Common myeloid progenitor, CD34-positive (primary cell): ENCODE measurements at regions of chr6 and their contacts with region 1.

Region 1: GRCh38 chr6:117555882-117556498 is 46.3 kb downstream of the GOPC start:
- DNase-seq: peak; percentile 30 to 66 (median 50)
- H3K4me3 ChIP-seq: no peak overlapping the region
- H3K27ac ChIP-seq: no peak overlapping the region
- H3K4me1 ChIP-seq: peaks cover 0 to 8% (median 2%) of the 10 kb centered on the region in 4 experiments
- H3K27me3 ChIP-seq: peaks cover 0 to 2% (median 0%) of the 10 kb centered on the region in 5 experiments

Region 2: DNA sequence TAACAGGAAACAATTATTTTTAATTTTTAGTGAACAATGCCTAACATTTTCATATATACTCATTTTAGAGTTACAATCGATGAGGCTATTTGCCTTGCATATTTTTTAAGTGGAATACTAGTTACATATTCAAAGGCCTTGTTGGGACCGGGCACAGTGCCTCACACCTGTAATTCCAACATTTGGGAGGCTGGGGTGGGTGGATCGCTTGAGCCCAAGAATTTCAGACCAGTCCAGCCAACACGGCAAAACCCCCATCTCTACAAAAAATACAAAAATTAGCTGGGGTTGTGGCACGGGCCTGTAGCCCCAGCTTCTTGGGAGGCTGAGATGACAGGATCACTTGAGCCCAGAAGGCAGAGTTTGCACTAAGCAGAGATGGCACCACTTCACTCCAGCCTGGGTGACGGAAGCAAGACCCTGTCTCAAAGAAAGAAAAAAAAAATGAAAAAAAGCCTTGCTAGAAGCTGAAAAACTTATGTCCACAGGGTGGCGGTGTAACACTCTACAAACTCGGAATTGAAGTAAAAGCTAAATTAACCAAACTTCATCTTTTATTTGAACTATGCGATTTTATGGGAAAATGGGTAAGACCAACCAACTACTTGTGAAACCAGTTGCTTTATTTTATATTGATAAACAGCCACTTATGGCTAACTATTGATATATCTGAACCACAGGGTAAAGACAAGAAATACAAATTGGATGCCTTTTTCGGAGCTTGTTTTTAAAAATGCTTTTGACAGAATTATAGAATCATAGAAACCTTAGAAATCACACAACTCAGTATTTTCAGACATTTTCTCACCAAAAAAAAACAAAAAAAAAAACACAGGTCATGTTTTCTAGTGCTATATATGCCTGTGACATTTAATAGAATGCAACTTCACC is 106.2 kb before region 1 on chr6:
- CTCF ChIA-PET with region 1: interaction called, 45 read pairs
- POLR2A ChIA-PET with region 1: no interaction called
- DNase-seq: peak; percentile 83 to 91 (median 84)
- H3K4me3 ChIP-seq: no peak overlapping the region
- H3K27ac ChIP-seq: no peak overlapping the region
- H3K4me1 ChIP-seq: no peaks in the 10 kb centered on the region
- H3K27me3 ChIP-seq: peaks cover 4 to 32% (median 15%) of the 10 kb centered on the region in 5 experiments

Region 3: GRCh38 chr6:117506180-117506835 is 49.7 kb before region 1 on chr6:
- CTCF ChIA-PET with region 1: no interaction called
- POLR2A ChIA-PET with region 1: no interaction called
- DNase-seq: no peak
- H3K4me3 ChIP-seq: no peak overlapping the region
- H3K27ac ChIP-seq: no peak overlapping the region
- H3K4me1 ChIP-seq: no peaks in the 10 kb centered on the region
- H3K27me3 ChIP-seq: peaks cover 0 to 2% (median 0%) of the 10 kb centered on the region in 5 experiments

Region 4: GRCh38 chr6:117568831-117569410 is 12.9 kb after region 1 on chr6:
- CTCF ChIA-PET with region 1: interaction called, 11 read pairs
- POLR2A ChIA-PET with region 1: no interaction called
- DNase-seq: no peak
- H3K4me3 ChIP-seq: no peak overlapping the region
- H3K27ac ChIP-seq: no peak overlapping the region
- H3K4me1 ChIP-seq: no peaks in the 10 kb centered on the region
- H3K27me3 ChIP-seq: no peaks in the 10 kb centered on the region